Lower leg skin (tissue), 4 donors: ENCODE measurements at regions of chr3 and their contacts with region 1.

Region 1: DNA sequence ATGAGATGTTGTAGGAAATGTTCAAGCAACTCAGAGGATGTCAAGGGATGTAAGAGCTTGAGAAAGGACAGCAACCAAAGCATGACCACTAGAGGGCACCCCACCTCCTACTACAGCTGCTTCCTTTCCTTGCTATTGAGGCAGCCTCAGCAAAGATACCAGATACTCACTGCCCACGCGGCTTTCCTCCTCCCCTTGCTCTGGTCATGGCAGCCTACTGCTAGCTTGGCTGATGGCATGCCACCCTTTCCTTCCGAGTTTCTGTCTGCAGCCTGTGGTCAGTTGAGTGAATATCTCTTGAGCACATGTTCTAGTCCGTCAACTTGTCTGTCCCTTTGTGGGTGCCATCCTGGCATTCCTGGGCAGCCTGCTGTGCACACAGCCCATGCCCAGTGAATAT is 4.4 kb upstream of the CXCR6 start:
- DNase-seq: peak; percentile 89 to 96
- H3K4me3 ChIP-seq: no peak overlapping the region
- CTCF ChIP-seq: peak in 1 of 3 donors; percentile 86
- POLR2A ChIP-seq: no peak

Region 2: GRCh38 chr3:46078712-46079400 is 140.0 kb after region 1 on chr3:
- intact Hi-C with region 1: loop called (anchors 5 kb)
- DNase-seq: peak; percentile 95 to 96
- H3K4me3 ChIP-seq: no peak overlapping the region
- CTCF ChIP-seq: peak in 1 of 3 donors; percentile 97
- POLR2A ChIP-seq: no peak

Region 3: GRCh38 chr3:46127501-46127900 is 188.6 kb after region 1 on chr3:
- intact Hi-C with region 1: no loop called
- DNase-seq: no peak
- H3K4me3 ChIP-seq: no peak overlapping the region
- CTCF ChIP-seq: no peak
- POLR2A ChIP-seq: no peak

Region 4: GRCh38 chr3:46378426-46378942 is 439.6 kb after region 1 on chr3:
- intact Hi-C with region 1: loop called (anchors 10 kb)
- DNase-seq: peak; percentile 49 to 91
- H3K4me3 ChIP-seq: no peak overlapping the region
- CTCF ChIP-seq: no peak
- POLR2A ChIP-seq: no peak

Region 5: DNA sequence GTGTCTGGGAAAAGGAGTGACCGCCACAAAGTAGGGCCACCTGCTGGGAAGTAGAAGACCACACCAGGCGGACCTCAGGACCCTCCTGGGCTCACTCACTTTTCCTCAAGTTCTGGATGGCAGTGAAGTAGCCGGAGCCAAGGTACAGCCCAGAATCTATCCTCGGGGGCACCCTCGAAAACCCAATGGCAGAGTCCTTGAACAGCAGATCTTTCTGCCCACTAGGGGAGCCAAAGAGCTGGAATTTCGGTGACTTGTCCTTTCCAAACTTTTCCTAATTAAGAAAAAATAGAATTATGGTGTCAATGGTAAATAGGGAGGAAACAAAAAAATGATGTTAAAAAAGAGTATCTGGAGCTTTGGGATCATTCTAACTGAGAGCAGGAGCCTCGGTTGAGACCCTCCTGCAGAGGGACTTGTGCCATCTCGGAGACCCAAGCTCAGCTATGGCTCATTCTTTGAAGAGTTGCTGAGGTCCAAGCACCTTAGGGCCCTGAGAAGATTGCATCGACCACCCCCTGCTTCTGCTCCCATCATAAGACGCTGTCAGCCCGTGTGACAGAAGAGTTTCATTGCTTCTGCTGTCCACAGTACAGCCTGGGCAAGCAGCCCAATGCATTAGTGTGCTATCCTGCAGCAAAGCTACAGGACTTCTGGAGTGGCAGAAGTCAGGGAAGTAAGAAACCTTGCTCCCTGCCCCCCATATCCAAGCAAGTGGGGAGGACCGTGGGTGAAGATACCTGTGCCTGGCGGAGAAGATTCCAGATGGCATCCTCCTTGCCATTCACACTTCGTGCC is 511.1 kb after region 1 on chr3:
- intact Hi-C with region 1: loop called (anchors 5 kb)
- DNase-seq: no peak
- H3K4me3 ChIP-seq: no peak overlapping the region
- CTCF ChIP-seq: no peak
- POLR2A ChIP-seq: no peak